CD14-positive monocyte (primary cell): ENCODE measurements at regions of chr13 and their contacts with region 1.

Region 1: GRCh38 chr13:24512197-24512907 is at the start of gene PARP4:
- DNase-seq: peak; percentile 87 to 93 (median 93)
- H3K4me3 ChIP-seq: peak within 1 kb of the TSS; percentile 65 to 94 (median 71)
- H3K4me3 Mint-ChIP-seq: peak within 1 kb of the TSS; percentile 92 to 93
- H3K27ac ChIP-seq: peak within 1 kb of the TSS; percentile 95 to 96
- H3K27ac Mint-ChIP-seq: peak within 1 kb of the TSS; percentile 98 to 99 (median 99)
- H3K4me1 ChIP-seq: peaks cover 13 to 25% of the 10 kb centered on the region in 2 donors
- H3K4me1 Mint-ChIP-seq: peaks cover 27% of the 10 kb centered on the region
- H3K27me3 ChIP-seq: no peaks in the 10 kb centered on the region
- H3K27me3 Mint-ChIP-seq: peaks cover 0 to 7% (median 3%) of the 10 kb centered on the region in 3 donors
- CTCF ChIP-seq: no peak
- polyA plus RNA-seq, gene PARP4: 34.0 to 56.8 (median 51.9) TPM

Region 2: GRCh38 chr13:23065623-23066022 is 1446.7 kb before region 1 on chr13:
- intact Hi-C with region 1: no loop called
- DNase-seq: no peak
- H3K4me3 ChIP-seq: no peak overlapping the region
- H3K4me3 Mint-ChIP-seq: no peak overlapping the region
- H3K27ac ChIP-seq: no peak overlapping the region
- H3K27ac Mint-ChIP-seq: no peak overlapping the region
- H3K4me1 ChIP-seq: no peaks in the 10 kb centered on the region
- H3K4me1 Mint-ChIP-seq: no peaks in the 10 kb centered on the region
- H3K27me3 ChIP-seq: no peaks in the 10 kb centered on the region
- H3K27me3 Mint-ChIP-seq: peaks cover 0 to 2% (median 0%) of the 10 kb centered on the region in 3 donors
- CTCF ChIP-seq: no peak

Region 3: DNA sequence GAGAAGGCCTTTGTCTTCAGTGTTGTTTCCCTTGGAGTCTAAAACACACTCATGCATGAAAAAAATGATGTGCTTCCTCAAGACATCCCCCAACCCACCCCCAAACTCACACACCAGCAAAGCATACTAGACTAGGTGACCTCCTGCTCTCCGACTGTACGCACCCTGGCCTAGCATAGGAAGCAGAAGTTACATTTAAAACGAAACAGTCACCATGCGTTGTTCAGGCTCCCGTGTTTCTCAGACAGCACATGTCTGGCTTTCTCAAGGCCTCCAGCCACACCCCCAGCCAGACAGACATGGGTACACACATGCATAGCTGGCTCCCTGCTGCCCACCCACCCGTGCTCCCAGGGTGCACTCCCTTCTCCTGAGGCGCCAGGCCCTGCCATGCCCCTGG is 231.6 kb before region 1 on chr13:
- intact Hi-C with region 1: loop called in 1 of 2 experiments (anchors 10 kb)
- DNase-seq: peak; percentile 80 to 89 (median 87)
- H3K4me3 ChIP-seq: peak overlapping the region in 1 of 3 experiments; percentile 20
- H3K4me3 Mint-ChIP-seq: peak overlapping the region; percentile 24 to 76
- H3K27ac ChIP-seq: peak overlapping the region; percentile 90 to 91
- H3K27ac Mint-ChIP-seq: peak overlapping the region; percentile 89 to 99 (median 97)
- H3K4me1 ChIP-seq: peaks cover 54 to 64% of the 10 kb centered on the region in 2 donors
- H3K4me1 Mint-ChIP-seq: peaks cover 65% of the 10 kb centered on the region
- H3K27me3 ChIP-seq: no peaks in the 10 kb centered on the region
- H3K27me3 Mint-ChIP-seq: no peaks in the 10 kb centered on the region
- CTCF ChIP-seq: no peak

Region 4: DNA sequence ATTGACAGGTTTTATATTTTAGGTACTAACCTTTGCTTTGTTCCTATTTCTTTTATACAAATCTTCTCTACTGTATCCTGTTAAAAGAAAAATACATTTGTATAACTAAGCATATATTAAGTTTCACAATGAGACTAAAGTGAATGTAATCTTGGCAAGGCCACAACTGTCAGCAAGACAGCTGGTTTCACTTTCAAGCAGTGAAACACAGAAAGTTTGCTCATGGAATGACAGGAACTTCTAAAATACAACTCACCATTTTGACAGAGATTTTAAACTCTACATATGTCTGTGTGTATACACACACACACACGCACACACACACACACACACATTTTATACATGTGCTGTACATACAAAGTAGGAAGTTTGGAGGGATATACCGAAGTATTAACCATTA is 53.1 kb before region 1 on chr13:
- intact Hi-C with region 1: no loop called
- DNase-seq: no peak
- H3K4me3 ChIP-seq: no peak overlapping the region
- H3K4me3 Mint-ChIP-seq: no peak overlapping the region
- H3K27ac ChIP-seq: peak overlapping the region in 1 of 2 donors; percentile 64
- H3K27ac Mint-ChIP-seq: peak overlapping the region in 2 of 7 donors; percentile 28 to 82
- H3K4me1 ChIP-seq: no peaks in the 10 kb centered on the region
- H3K4me1 Mint-ChIP-seq: no peaks in the 10 kb centered on the region
- H3K27me3 ChIP-seq: no peaks in the 10 kb centered on the region
- H3K27me3 Mint-ChIP-seq: no peaks in the 10 kb centered on the region
- CTCF ChIP-seq: no peak

Region 5: DNA sequence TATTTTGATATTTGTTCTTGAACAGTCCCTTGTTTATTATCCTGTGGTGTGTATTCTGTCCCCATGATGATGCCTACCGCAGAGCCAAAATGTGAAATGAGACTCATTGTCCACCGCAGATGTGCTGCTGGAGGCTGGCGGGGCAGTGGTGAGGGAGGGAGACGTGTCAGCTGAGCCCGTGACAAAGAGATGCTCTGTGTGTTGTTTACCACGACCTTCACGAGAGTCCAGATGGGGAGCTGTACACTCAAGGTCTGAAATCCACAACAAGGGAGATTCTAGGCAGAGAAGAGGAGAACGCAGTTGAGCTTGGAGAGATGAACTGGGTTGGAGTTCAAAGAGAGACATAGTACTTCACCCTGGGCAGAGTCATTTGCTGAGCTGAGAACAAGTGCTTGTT is 680.6 kb after region 1 on chr13:
- intact Hi-C with region 1: no loop called
- DNase-seq: no peak
- H3K4me3 ChIP-seq: no peak overlapping the region
- H3K4me3 Mint-ChIP-seq: no peak overlapping the region
- H3K27ac ChIP-seq: no peak overlapping the region
- H3K27ac Mint-ChIP-seq: no peak overlapping the region
- H3K4me1 ChIP-seq: no peaks in the 10 kb centered on the region
- H3K4me1 Mint-ChIP-seq: no peaks in the 10 kb centered on the region
- H3K27me3 ChIP-seq: peaks cover 5 to 9% of the 10 kb centered on the region in 2 donors
- H3K27me3 Mint-ChIP-seq: peaks cover 9 to 30% (median 27%) of the 10 kb centered on the region in 3 donors
- CTCF ChIP-seq: no peak